Mammary epithelial cell (primary cell): ENCODE measurements at regions of chr10 and their contacts with region 1.

Region 1: DNA sequence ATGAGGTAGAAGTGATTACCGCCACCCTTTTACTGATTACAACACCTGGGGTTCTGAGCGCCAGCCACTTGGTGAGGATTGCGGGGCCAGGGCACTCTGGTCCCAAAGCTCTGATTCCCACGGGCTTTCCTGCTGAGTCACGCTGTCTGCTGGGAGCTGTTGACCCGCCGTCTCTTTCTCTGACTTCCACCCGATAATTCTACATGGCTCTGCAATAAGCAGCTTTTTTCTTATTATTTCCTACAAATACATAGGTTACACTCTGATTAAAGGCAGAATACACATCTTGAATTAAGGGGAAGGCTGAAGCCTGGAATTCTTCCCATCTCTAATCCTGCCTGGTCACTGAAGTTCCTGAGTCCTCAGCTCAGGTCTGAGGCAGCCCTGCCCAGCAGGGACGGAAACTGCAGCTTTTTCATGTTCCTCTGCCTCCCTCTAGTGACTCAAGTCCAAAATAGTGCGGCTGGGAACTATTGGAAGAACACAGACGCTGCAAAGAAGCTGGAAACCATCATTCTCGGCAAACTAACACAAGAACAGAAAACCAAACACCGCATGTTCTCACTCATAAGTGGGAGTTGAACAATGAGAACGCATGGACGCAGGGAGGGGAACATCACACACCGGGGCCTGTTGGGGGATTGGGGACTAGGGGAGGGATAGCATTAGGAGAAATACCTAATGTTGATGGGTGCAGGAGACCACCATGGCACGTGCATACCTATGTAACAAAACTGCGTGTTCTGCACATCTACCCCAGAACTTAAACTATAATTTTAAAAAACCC is 178.3 kb downstream of the PRKCQ start:
- DNase-seq: peak; percentile 82
- H3K4me3 ChIP-seq: peak overlapping the region; percentile 31 to 58 (median 39)
- H3K27ac ChIP-seq: peak overlapping the region; percentile 64
- H3K4me1 ChIP-seq: peaks cover 11% of the 10 kb centered on the region
- H3K27me3 ChIP-seq: no peaks in the 10 kb centered on the region
- CTCF ChIP-seq: peak; percentile 65 to 78

Region 2: GRCh38 chr10:4813023-4813422 is 1588.7 kb before region 1 on chr10:
- CTCF ChIA-PET with region 1: interaction called, 12 read pairs
- dilution Hi-C with region 1: no loop called
- in situ Hi-C with region 1: no loop called
- intact Hi-C with region 1: no loop called
- DNase-seq: peak; percentile 89
- H3K4me3 ChIP-seq: no peak overlapping the region
- H3K27ac ChIP-seq: peak overlapping the region; percentile 38
- H3K4me1 ChIP-seq: peaks cover 27% of the 10 kb centered on the region
- H3K27me3 ChIP-seq: no peaks in the 10 kb centered on the region
- CTCF ChIP-seq: no peak

Region 3: GRCh38 chr10:6014241-6014761 is 387.5 kb before region 1 on chr10:
- CTCF ChIA-PET with region 1: interaction called, 12 read pairs
- dilution Hi-C with region 1: no loop called
- in situ Hi-C with region 1: no loop called
- intact Hi-C with region 1: loop called (anchors 1 kb)
- DNase-seq: peak; percentile 32
- H3K4me3 ChIP-seq: no peak overlapping the region
- H3K27ac ChIP-seq: no peak overlapping the region
- H3K4me1 ChIP-seq: no peaks in the 10 kb centered on the region
- H3K27me3 ChIP-seq: no peaks in the 10 kb centered on the region
- CTCF ChIP-seq: peak; percentile 65 to 72

Region 4: GRCh38 chr10:6114805-6115341 is 286.9 kb before region 1 on chr10:
- CTCF ChIA-PET with region 1: no interaction called
- dilution Hi-C with region 1: loop called (anchors 10 kb)
- in situ Hi-C with region 1: loop called in 1 of 2 experiments (anchors 10 kb)
- intact Hi-C with region 1: no loop called
- DNase-seq: no peak
- H3K4me3 ChIP-seq: no peak overlapping the region
- H3K27ac ChIP-seq: no peak overlapping the region
- H3K4me1 ChIP-seq: peaks cover 6% of the 10 kb centered on the region
- H3K27me3 ChIP-seq: no peaks in the 10 kb centered on the region
- CTCF ChIP-seq: no peak

Region 5: GRCh38 chr10:6211671-6212635 is 189.8 kb before region 1 on chr10:
- CTCF ChIA-PET with region 1: interaction called, 4 read pairs
- dilution Hi-C with region 1: no loop called
- in situ Hi-C with region 1: loop called in 1 of 2 experiments (anchors 10 kb)
- intact Hi-C with region 1: loop called (anchors 5 kb)
- DNase-seq: no peak
- H3K4me3 ChIP-seq: no peak overlapping the region
- H3K27ac ChIP-seq: no peak overlapping the region
- H3K4me1 ChIP-seq: peaks cover 11% of the 10 kb centered on the region
- H3K27me3 ChIP-seq: no peaks in the 10 kb centered on the region
- CTCF ChIP-seq: no peak

Region 6: GRCh38 chr10:6275022-6275997 is 126.4 kb before region 1 on chr10:
- CTCF ChIA-PET with region 1: interaction called, 19 read pairs
- dilution Hi-C with region 1: no loop called
- in situ Hi-C with region 1: no loop called
- intact Hi-C with region 1: loop called (anchors 1 kb)
- DNase-seq: peak; percentile 99
- H3K4me3 ChIP-seq: peak overlapping the region in 1 of 3 experiments; percentile 34
- H3K27ac ChIP-seq: peak overlapping the region; percentile 84
- H3K4me1 ChIP-seq: peaks cover 27% of the 10 kb centered on the region
- H3K27me3 ChIP-seq: no peaks in the 10 kb centered on the region
- CTCF ChIP-seq: no peak

Region 7: GRCh38 chr10:6678211-6678803 is 276.6 kb after region 1 on chr10:
- CTCF ChIA-PET with region 1: interaction called, 11 read pairs
- dilution Hi-C with region 1: no loop called
- in situ Hi-C with region 1: no loop called
- intact Hi-C with region 1: no loop called
- DNase-seq: peak; percentile 12
- H3K4me3 ChIP-seq: no peak overlapping the region
- H3K27ac ChIP-seq: no peak overlapping the region
- H3K4me1 ChIP-seq: no peaks in the 10 kb centered on the region
- H3K27me3 ChIP-seq: no peaks in the 10 kb centered on the region
- CTCF ChIP-seq: peak; percentile 17 to 34